Activated CD4-positive, alpha-beta T cell treated with anti-CD3 and anti-CD28 coated beads, Interleukin-2, amount 10 ng/mL, durations not matched to agents 24 days and 14 days (primary cell): ENCODE measurements at regions of chr3 and their contacts with region 1.

Region 1: DNA sequence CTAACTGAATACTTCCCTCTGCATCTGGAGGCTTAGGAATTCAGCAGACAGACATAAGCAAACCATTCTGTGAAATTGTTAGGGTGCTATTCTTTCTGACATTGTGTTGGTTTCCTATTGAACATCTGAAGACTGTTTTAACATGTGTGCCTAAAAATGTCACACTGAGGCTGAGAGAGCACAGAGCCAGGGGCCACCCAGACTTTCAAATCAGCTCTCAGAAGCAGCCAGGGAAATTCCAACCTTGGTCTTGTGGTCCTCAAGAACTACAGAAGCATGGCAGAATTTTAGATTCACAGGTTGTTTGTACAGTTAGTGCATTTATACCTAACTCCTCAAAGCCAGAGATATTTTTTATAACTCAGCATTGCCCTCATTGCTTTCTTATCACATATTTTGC is 929.2 kb upstream of the CFAP20DC start:
- DNase-seq: peak; percentile 81
- H3K4me3 Mint-ChIP-seq: peak overlapping the region; percentile 78
- H3K27ac Mint-ChIP-seq: peak overlapping the region; percentile 97
- H3K4me1 Mint-ChIP-seq: peaks cover 33% of the 10 kb centered on the region
- H3K27me3 Mint-ChIP-seq: no peaks in the 10 kb centered on the region

Region 2: GRCh38 chr3:59456852-59457485 is 522.0 kb before region 1 on chr3:
- intact Hi-C with region 1: loop called (anchors 1 kb)
- DNase-seq: peak; percentile 77
- H3K4me3 Mint-ChIP-seq: no peak overlapping the region
- H3K27ac Mint-ChIP-seq: peak overlapping the region; percentile 59
- H3K4me1 Mint-ChIP-seq: peaks cover 34% of the 10 kb centered on the region
- H3K27me3 Mint-ChIP-seq: no peaks in the 10 kb centered on the region

Region 3: GRCh38 chr3:59925946-59926345 is 53.0 kb before region 1 on chr3:
- intact Hi-C with region 1: loop called (anchors 2 kb)
- DNase-seq: no peak
- H3K4me3 Mint-ChIP-seq: no peak overlapping the region
- H3K27ac Mint-ChIP-seq: no peak overlapping the region
- H3K4me1 Mint-ChIP-seq: peaks cover 52% of the 10 kb centered on the region
- H3K27me3 Mint-ChIP-seq: no peaks in the 10 kb centered on the region

Region 4: GRCh38 chr3:60010781-60011180 is 31.8 kb after region 1 on chr3:
- intact Hi-C with region 1: loop called (anchors 1 kb)
- DNase-seq: peak; percentile 92
- H3K4me3 Mint-ChIP-seq: peak overlapping the region; percentile 80
- H3K27ac Mint-ChIP-seq: peak overlapping the region; percentile 93
- H3K4me1 Mint-ChIP-seq: peaks cover 66% of the 10 kb centered on the region
- H3K27me3 Mint-ChIP-seq: no peaks in the 10 kb centered on the region

Region 5: GRCh38 chr3:60048447-60048848 is 69.5 kb after region 1 on chr3:
- intact Hi-C with region 1: loop called (anchors 1 kb)
- DNase-seq: peak; percentile 91
- H3K4me3 Mint-ChIP-seq: peak overlapping the region; percentile 80
- H3K27ac Mint-ChIP-seq: peak overlapping the region; percentile 91
- H3K4me1 Mint-ChIP-seq: peaks cover 70% of the 10 kb centered on the region
- H3K27me3 Mint-ChIP-seq: no peaks in the 10 kb centered on the region

Region 6: GRCh38 chr3:60094392-60094955 is 115.5 kb after region 1 on chr3:
- intact Hi-C with region 1: no loop called
- DNase-seq: no peak
- H3K4me3 Mint-ChIP-seq: no peak overlapping the region
- H3K27ac Mint-ChIP-seq: no peak overlapping the region
- H3K4me1 Mint-ChIP-seq: peaks cover 5% of the 10 kb centered on the region
- H3K27me3 Mint-ChIP-seq: no peaks in the 10 kb centered on the region

Region 7: DNA sequence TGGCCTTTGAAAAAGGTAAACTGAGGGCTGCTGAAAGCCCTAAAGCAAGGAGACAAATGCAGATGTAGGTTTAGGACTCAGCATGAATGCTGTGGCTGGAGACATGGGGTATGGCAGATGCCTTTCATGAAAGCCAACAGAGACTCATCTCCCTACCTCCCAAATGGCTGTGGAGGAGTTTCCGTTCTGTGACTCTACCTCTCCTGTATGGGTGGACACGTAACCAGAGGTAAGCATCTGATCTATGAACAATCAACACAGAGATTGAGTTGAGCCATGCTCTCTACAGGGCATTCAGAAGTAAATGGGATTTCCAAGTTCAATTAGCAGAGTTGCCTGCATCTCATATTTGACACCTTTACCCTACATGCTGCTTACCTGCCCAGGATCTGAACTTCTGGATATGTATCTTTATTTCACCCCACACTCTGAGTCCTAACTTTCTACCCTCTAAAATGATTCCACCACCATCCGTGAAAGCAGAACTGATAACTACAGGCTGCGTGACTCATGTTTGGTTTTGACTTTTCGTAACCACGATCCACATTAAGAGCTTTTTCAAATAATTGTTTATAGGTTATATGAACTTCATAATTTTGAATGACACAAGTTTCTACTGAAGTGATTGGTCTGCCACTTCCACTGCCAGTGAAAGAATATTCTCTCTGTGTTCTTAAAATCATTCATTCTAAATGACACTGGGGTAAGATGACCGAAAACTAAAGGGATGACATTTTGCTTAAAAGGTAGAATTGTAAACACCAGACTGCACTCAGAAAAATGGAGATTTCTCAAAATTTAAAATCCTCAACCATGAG is 213.5 kb after region 1 on chr3:
- intact Hi-C with region 1: loop called (anchors 2 kb)
- DNase-seq: peak; percentile 70
- H3K4me3 Mint-ChIP-seq: peak overlapping the region; percentile 45
- H3K27ac Mint-ChIP-seq: peak overlapping the region; percentile 90
- H3K4me1 Mint-ChIP-seq: peaks cover 48% of the 10 kb centered on the region
- H3K27me3 Mint-ChIP-seq: no peaks in the 10 kb centered on the region

Region 8: GRCh38 chr3:60228823-60229222 is 249.8 kb after region 1 on chr3:
- intact Hi-C with region 1: no loop called
- DNase-seq: no peak
- H3K4me3 Mint-ChIP-seq: no peak overlapping the region
- H3K27ac Mint-ChIP-seq: no peak overlapping the region
- H3K4me1 Mint-ChIP-seq: no peaks in the 10 kb centered on the region
- H3K27me3 Mint-ChIP-seq: no peaks in the 10 kb centered on the region